Breast epithelium (tissue), 4 donors: ENCODE measurements at regions of chr14 and their contacts with region 1.

Region 1: GRCh38 chr14:62696331-62696924 is 348.8 kb downstream of the KCNH5 start:
- DNase-seq: no peak
- H3K4me3 ChIP-seq: no peak overlapping the region
- H3K27ac ChIP-seq: no peak overlapping the region
- H3K4me1 ChIP-seq: no peaks in the 10 kb centered on the region
- H3K27me3 ChIP-seq: no peaks in the 10 kb centered on the region
- CTCF ChIP-seq: no peak
- POLR2A ChIP-seq: no peak

Region 2: GRCh38 chr14:62251237-62251636 is 445.2 kb before region 1 on chr14:
- intact Hi-C with region 1: loop called (anchors 5 kb)
- DNase-seq: no peak
- H3K4me3 ChIP-seq: no peak overlapping the region
- H3K27ac ChIP-seq: no peak overlapping the region
- H3K4me1 ChIP-seq: no peaks in the 10 kb centered on the region
- H3K27me3 ChIP-seq: no peaks in the 10 kb centered on the region
- CTCF ChIP-seq: no peak
- POLR2A ChIP-seq: no peak